ENCODE measurements at regions of chr20 and their contacts with region 1.

Region 1: GRCh38 chr20:45771182-45771759 is 20.4 kb downstream of the WFDC3 start:
- DNase-seq: peak; percentile 62 to 77
- ATAC-seq: peak; percentile 77 to 88
- H3K4me3 ChIP-seq: no peak overlapping the region
- H3K27ac ChIP-seq: no peak overlapping the region; a peak in 1 of 6 replicates
- H3K4me1 ChIP-seq: peaks cover 4% of the 10 kb centered on the region; the same call in 2 of the 3 replicates
- CTCF ChIP-seq: peak; percentile 98
- EP300 ChIP-seq: no peak
- POLR2A ChIP-seq: no peak
- RAD21 ChIP-seq: peak; percentile 96 to 97

Region 2: DNA sequence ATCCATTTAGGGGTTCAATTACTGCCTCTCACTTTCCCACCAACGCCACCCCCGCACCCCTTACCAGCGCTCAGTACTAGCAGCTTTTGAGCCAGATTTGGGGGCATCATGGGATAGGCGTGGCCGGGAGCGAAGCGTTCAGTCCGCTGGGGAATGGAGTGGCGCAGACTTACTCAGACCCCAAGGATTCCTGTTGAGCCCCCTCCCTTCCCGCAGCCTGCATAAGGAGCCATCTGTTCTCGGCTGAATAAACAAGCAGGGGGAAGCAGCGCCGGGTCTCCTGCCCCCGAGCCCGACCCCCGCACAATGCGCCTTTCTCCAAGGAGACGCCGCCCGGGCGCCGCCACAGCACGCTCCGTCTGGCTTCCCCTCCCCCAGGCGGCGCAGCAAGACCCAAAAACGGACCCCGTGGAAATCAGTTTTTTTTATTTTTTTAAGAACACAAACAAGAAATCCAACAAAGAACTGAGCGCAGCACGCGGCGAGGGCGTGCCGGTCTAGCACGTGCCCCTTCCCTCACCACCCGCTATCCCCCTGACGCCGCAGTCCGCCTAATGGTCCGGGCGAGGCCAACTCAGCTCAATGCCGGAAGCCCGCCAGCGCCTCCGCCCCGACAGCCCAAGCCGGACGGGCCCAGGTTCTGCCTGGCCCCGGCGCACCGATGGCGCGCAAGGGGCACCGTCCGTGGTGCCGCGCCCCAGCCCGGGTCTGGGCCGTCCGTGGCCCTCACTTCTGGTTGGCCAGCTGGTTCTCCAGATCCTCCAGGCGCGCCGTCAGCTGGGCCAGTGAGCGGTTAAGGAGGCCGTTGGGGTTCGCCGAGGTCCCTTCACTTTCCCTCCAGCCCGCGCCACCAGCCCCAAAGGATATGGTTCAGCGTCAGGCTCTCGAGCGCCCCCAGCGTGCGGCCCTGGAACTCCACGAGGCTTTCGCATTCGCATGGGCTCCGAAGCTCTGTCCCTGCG is 477.9 kb before region 1 on chr20:
- CTCF ChIA-PET with region 1: interaction called, 14 read pairs
- POLR2A ChIA-PET with region 1: no interaction called
- DNase-seq: peak; percentile 82 to 95
- ATAC-seq: peak; percentile 78 to 91
- H3K4me3 ChIP-seq: peak overlapping the region; percentile 55
- H3K27ac ChIP-seq: peak overlapping the region; percentile 77 to 92
- H3K4me1 ChIP-seq: no peaks in the 10 kb centered on the region
- CTCF ChIP-seq: peak; percentile 76
- EP300 ChIP-seq: no peak
- POLR2A ChIP-seq: no peak
- RAD21 ChIP-seq: peak in 1 of 2 experiments; percentile 38; a peak in 2 of 5 replicates

Region 3: DNA sequence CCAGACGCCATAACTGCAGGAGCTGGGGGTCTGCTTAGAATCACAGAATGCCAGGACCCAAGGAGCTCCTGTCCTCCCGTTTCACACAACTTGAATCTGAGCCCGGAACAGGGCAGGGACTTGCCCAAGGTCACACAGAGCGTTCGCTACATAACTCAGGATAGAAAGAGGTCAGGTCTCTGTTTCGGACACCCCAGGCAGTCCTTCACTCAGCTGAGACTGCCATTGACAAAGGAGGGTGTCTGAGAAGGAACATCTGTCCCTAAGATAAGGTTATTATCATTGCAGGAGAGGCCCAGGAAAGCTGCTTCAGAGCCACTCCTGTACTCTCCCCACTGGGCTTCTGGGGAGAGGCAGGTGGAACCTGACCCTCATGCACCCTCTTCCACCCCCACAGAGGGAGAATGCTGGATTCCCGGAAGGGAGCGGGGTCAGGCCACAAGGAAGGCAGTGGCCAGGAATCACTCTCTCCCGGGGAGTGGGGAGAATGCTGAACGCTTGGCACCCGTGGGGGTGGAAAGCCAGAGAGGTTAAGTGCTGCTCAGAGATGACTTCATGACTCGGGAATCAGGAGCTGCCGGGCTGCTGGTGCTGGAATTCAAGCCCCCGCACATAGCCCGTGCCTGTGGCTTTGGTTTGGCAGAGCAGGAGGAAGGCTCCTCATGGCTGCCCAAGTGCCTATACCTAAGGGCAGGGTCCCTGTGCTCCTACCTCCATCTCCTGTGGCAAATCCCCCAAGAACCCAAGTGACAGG is 433.7 kb before region 1 on chr20:
- CTCF ChIA-PET with region 1: interaction called, 45 read pairs
- POLR2A ChIA-PET with region 1: no interaction called
- DNase-seq: peak in 1 of 2 experiments; percentile 59
- ATAC-seq: peak; percentile 41 to 63
- H3K4me3 ChIP-seq: peak overlapping the region; percentile 0; the same call in 1 of the 3 replicates
- H3K27ac ChIP-seq: peak overlapping the region; percentile 84 to 96
- H3K4me1 ChIP-seq: peaks cover 75% of the 10 kb centered on the region
- CTCF ChIP-seq: no peak
- EP300 ChIP-seq: 0 out of 5 replicates have a peak, but pooled peaks of 1 of the 2 experiments have one; percentile 21
- POLR2A ChIP-seq: no peak
- RAD21 ChIP-seq: no peak

Region 4: DNA sequence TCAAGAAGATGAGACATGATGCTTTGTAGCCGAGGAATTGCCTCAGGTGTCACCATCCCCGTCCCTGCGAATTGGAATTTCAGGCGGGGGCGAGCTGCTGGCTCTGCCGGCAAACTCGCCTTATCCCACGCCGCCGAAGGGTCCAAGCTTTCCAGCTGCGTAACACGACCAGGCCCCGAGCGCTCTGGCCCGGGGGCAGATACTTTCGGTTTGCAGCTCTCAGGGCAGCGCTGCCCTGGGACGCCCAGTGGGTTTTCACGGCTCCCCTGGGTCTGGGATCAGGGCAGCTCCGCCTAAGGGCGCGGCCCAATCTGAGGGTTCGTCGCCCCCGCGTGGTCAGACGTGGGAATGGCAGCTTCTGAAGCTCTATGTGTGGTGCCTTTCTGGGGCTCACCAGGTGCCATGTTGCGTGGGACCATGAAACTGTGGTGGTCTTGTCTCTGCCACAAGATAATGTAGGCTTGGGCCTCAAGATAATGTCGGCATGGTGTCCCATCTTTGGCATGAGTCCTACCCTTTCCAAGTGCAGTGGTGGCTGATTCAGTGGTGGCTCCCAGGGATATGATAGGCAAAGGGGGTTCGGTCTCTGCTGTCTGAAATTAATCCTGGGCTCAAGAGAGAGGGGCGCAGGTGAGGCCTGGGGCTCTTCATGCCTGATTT is 334.4 kb before region 1 on chr20:
- CTCF ChIA-PET with region 1: interaction called, 15 read pairs
- POLR2A ChIA-PET with region 1: no interaction called
- DNase-seq: peak; percentile 77 to 90
- ATAC-seq: peak; percentile 98 to 99
- H3K4me3 ChIP-seq: peak overlapping the region; percentile 58
- H3K27ac ChIP-seq: peak overlapping the region; percentile 72 to 85
- H3K4me1 ChIP-seq: peaks cover 3% of the 10 kb centered on the region; the same call in 1 of the 3 replicates
- CTCF ChIP-seq: peak; percentile 92
- EP300 ChIP-seq: no peak
- POLR2A ChIP-seq: no peak
- RAD21 ChIP-seq: peak; percentile 91 to 96

Region 5: GRCh38 chr20:45538209-45538799 is 233.0 kb before region 1 on chr20:
- CTCF ChIA-PET with region 1: interaction called, 28 read pairs
- POLR2A ChIA-PET with region 1: no interaction called
- DNase-seq: no peak
- ATAC-seq: no peak
- H3K4me3 ChIP-seq: no peak overlapping the region
- H3K27ac ChIP-seq: no peak overlapping the region
- H3K4me1 ChIP-seq: no peaks in the 10 kb centered on the region
- CTCF ChIP-seq: no peak
- EP300 ChIP-seq: no peak
- POLR2A ChIP-seq: no peak
- RAD21 ChIP-seq: no peak

Region 6: DNA sequence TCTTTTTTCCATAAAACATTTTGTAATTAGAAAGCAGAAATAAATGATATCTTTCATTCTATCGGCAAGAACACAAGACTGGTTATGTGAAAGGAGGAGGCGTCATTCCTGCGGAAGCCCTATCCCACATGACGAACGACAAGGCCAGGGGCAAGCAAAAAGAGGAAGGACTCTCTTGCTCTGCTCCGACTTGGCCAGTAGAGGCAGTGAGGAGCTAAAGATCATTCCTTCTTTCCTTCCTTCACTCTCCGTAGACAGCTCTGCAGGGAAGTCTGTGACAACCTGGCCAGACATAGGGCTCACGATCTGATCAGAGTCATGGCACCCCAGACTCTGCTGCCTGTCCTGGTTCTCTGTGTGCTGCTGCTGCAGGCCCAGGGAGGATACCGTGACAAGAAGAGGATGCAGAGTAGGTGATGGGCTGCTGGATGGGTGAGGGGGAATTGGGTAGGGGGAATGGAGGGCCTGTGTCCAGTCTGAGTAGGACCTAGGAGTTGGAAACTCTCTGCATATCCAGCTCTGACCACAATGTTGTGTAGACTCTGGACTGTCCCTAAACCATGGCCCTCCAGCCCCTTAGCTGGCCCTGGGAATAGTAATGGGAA is 141.7 kb before region 1 on chr20 and contains the start of gene WFDC10A:
- CTCF ChIA-PET with region 1: interaction called, 20 read pairs
- POLR2A ChIA-PET with region 1: no interaction called
- DNase-seq: peak; percentile 62 to 64
- ATAC-seq: peak; percentile 98 to 100
- H3K4me3 ChIP-seq: no peak within 1 kb of the TSS
- H3K27ac ChIP-seq: no peak within 1 kb of the TSS
- H3K4me1 ChIP-seq: no peaks in the 10 kb centered on the region
- CTCF ChIP-seq: peak; percentile 46
- EP300 ChIP-seq: no peak
- POLR2A ChIP-seq: no peak
- RAD21 ChIP-seq: peak; percentile 33 to 49; a peak in 3 of 5 replicates
- polyA plus RNA-seq, gene WFDC10A: not detected in 2 replicates

Region 7: DNA sequence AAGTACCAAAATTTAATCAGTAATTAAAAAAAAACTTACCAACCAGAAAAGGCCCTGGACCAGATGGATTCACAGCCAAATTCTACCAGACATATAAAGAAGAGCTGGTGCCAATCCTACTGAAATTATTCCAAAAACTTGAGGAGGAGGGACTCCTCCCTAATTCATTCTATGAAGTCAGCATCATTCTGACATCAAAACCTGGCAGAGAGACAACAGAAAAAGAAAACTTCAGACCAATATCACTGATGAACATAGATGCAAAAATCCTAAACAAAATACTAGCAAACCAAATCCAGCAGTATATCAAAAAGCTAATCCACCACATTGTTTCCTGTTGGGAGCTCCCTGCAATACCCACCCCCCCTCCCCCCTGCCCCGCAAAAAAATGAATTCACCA is 101.1 kb before region 1 on chr20 and contains the start of gene WFDC11:
- CTCF ChIA-PET with region 1: no interaction called
- POLR2A ChIA-PET with region 1: no interaction called
- DNase-seq: no peak
- ATAC-seq: no peak
- H3K4me3 ChIP-seq: no peak within 1 kb of the TSS
- H3K27ac ChIP-seq: no peak within 1 kb of the TSS
- H3K4me1 ChIP-seq: no peaks in the 10 kb centered on the region
- CTCF ChIP-seq: no peak
- EP300 ChIP-seq: no peak
- POLR2A ChIP-seq: no peak
- RAD21 ChIP-seq: no peak
- polyA plus RNA-seq, gene WFDC11: not detected in 2 replicates